ENCODE measurements at regions of chr7 and their contacts with region 1.

Region 1: GRCh38 chr7:8134089-8134733 is 127.8 kb downstream of the ICA1 start:
- DNase-seq: peak; percentile 81
- H3K4me3 Mint-ChIP-seq: peak overlapping the region; percentile 42
- H3K27ac Mint-ChIP-seq: peak overlapping the region; percentile 65
- H3K4me1 Mint-ChIP-seq: peaks cover 52% of the 10 kb centered on the region
- H3K27me3 Mint-ChIP-seq: no peaks in the 10 kb centered on the region

Region 2: DNA sequence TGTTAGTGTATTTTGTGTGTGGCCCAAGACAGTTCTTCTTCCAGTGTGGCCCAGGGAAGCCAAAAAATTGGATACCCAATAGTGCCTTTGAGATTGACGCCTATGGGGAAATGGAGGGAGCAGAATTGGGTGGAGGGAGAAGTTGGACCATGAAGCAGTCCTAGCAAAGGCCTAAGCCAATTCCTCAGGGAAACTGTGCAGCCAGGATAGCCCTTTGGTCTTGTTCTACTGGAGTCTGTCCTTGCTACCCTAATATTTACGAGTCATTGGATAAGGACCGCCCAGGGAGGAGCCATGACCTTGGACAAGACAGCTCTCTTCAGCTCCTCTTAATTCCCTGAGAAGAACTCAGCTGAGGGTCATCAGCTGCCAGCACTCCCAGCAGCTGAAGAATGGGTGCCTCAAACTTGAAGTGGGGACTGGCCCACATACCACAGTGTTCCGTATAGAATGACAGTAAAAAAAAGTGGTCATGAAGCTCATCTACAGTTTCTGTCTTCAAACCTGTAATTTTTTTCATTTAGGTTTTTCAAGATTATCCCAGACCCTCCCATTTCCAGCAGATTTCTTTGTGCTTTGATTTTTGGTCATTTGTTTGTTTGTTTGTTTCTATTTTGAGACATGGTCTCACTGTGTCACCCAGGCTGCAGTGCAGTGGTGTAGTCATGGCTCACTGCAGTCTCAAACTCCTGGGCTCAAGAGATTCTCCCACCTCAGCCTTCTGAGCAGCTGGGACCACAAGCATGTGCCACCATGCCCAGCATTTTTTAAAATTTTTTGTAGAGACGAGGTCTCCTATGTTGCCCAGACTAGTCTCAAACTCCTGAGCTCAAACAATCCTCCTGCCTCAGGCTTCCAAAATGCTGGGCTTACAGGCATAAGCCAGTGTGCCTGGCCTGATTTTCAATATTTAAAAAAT is 870.6 kb before region 1 on chr7:
- intact Hi-C with region 1: loop called (anchors 5 kb)
- DNase-seq: no peak
- H3K4me3 Mint-ChIP-seq: no peak overlapping the region
- H3K27ac Mint-ChIP-seq: no peak overlapping the region
- H3K4me1 Mint-ChIP-seq: peaks cover 18% of the 10 kb centered on the region
- H3K27me3 Mint-ChIP-seq: no peaks in the 10 kb centered on the region

Region 3: DNA sequence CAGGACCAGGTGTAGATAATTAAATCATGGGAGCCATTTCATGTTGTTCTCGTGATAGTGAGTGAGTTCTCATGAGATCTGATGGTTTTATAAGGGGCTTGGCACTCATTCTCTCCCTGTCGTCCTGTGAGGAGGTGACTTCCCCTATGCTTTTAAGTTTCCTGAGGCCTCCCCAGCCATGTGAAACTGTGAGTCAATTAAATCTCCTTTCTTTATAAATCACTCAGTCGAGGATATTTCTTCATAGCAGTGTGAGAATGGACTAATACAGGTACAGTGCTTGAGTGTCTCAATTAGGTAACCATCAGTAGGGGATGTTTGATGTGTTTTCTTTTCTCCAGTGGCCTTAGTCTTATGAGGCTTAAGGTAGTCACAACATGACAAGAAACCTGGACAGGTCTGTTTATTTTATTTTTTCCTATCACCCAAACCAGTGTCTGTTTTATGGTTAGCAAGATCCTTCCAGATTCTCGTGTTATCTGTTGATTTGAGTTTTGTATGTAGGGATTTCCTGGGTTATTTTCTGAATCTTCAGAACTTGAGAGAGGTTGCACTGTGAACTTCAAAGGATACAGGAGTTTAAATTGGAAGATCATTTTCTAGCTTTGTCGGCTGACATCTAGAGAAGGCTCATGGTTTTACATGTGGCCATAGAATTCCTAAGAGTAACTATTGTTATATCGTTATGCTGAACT is 461.5 kb before region 1 on chr7:
- intact Hi-C with region 1: loop called (anchors 2 kb)
- DNase-seq: peak; percentile 50
- H3K4me3 Mint-ChIP-seq: peak overlapping the region; percentile 55
- H3K27ac Mint-ChIP-seq: peak overlapping the region; percentile 72
- H3K4me1 Mint-ChIP-seq: peaks cover 29% of the 10 kb centered on the region
- H3K27me3 Mint-ChIP-seq: no peaks in the 10 kb centered on the region

Region 4: DNA sequence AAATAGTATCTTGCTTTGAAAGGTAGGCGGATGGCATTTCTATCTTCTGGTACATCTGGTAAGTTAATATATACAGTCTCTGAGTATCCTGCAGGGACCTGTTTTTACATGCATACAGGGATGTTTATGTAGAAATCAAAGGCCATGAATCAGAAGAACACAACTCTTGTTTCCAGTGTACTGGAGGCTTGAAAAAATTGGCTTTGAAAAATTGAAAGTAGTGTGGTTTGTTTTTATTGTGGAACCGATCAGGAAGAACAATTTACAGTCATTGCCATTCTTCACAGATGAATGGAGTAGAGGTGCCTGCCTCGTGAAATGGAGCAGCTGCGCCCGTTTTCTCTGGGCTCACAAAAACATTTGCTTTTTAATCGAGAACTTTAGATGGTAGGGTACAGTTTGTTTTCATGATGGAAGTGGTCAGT is 361.8 kb before region 1 on chr7:
- intact Hi-C with region 1: loop called (anchors 2 kb)
- DNase-seq: peak; percentile 65
- H3K4me3 Mint-ChIP-seq: peak overlapping the region; percentile 49
- H3K27ac Mint-ChIP-seq: peak overlapping the region; percentile 73
- H3K4me1 Mint-ChIP-seq: peaks cover 12% of the 10 kb centered on the region
- H3K27me3 Mint-ChIP-seq: peaks cover 2% of the 10 kb centered on the region

Region 5: GRCh38 chr7:8176370-8177081 is 42.3 kb after region 1 on chr7:
- intact Hi-C with region 1: loop called (anchors 1 kb)
- DNase-seq: peak; percentile 89
- H3K4me3 Mint-ChIP-seq: peak overlapping the region; percentile 78
- H3K27ac Mint-ChIP-seq: peak overlapping the region; percentile 93
- H3K4me1 Mint-ChIP-seq: peaks cover 40% of the 10 kb centered on the region
- H3K27me3 Mint-ChIP-seq: no peaks in the 10 kb centered on the region

Region 6: DNA sequence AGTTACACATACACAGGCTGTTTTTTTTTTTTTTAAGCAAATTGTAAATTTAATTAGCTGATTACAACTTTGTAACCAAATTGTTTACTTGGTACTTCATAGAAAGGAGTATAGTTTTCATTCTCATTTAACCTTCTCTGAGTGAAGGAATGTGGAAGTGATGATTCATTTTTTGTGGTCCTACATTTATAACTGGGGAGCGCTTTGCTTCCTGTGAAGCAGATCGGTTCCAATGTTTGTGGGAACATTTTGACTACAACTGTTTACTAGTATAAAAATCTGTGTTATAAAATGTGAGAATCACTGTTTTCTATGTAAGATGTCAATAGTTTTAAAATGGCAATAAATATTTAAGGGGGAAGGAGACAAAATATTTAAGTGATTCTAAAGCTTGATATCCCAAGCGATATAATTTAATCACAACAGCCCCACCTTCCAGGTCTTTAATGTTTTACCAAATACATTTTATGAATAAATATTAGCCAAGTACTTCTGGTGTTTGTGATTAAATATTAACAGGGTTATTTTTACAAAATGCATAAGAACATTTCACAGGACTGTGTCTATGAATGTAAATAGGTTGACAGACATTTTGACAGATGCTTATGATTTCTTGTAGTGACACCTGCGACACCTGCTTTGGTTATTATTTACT is 356.3 kb after region 1 on chr7:
- intact Hi-C with region 1: no loop called
- DNase-seq: no peak
- H3K4me3 Mint-ChIP-seq: no peak overlapping the region
- H3K27ac Mint-ChIP-seq: no peak overlapping the region
- H3K4me1 Mint-ChIP-seq: no peaks in the 10 kb centered on the region
- H3K27me3 Mint-ChIP-seq: no peaks in the 10 kb centered on the region